HepG2 (cell line): ENCODE measurements at regions of chr6 and their contacts with region 1.

Region 1: DNA sequence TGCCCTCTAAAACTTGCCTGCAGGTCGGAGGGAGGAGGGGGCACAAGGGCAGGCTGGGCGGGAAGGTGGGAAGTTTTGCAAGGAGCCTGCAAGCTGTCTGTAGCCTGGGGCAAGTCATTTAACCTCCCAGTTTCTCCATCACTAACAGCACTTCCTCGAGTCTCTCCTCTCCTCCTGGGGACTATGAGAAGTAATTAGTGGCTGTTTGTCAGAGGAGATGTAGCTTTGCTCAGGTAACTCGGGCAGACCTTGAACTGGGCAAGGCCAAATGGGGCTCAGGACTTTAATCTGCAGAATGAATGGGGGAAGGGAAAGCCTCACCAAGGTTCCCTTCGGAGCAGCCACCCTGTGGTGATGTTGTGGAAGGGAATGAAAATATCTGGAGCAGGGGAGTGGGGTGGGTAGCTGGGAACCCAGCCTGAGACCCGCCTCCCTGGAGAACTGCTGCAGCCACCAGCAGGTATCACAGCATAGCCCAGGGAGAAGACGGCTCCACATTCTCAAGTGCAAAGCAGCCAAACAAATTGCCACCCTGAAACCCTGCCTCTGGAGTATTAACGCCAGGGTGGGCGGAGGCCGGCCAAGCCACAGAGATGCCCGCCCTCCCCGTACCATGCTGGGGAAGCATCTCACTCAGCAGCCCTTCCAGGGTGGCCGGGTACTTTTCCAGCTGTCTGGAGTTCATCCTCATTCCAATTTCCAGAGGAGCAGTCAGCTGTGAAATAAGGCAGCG is 6.1 kb upstream of the LEMD2 start:
- DNase-seq: peak; percentile 40
- ATAC-seq: peak; percentile 70
- H3K4me3 ChIP-seq: peak overlapping the region in 1 of 3 experiments; percentile 8; a peak in 1 of 6 replicates
- H3K27ac ChIP-seq: no peak overlapping the region
- H3K4me1 ChIP-seq: peaks cover 32% of the 10 kb centered on the region
- H3K27me3 ChIP-seq: peaks cover 5 to 52% of the 10 kb centered on the region in 2 experiments; a peak in 4 of 5 replicates
- CTCF ChIP-seq: 0 out of 2 replicates have a peak, but pooled peaks have one; percentile 37
- EP300 ChIP-seq: peak in 1 of 2 experiments; percentile 25; a peak in 1 of 4 replicates
- POLR2A ChIP-seq: no peak
- RAD21 ChIP-seq: no peak

Region 2: GRCh38 chr6:33830635-33831240 is 35.7 kb after region 1 on chr6:
- CTCF ChIA-PET with region 1: no interaction called
- POLR2A ChIA-PET with region 1: no interaction called
- in situ Hi-C with region 1: no loop called
- intact Hi-C with region 1: loop called (anchors 1 kb)
- DNase-seq: no peak
- ATAC-seq: peak; percentile 55
- H3K4me3 ChIP-seq: no peak overlapping the region
- H3K27ac ChIP-seq: no peak overlapping the region
- H3K4me1 ChIP-seq: peaks cover 20% of the 10 kb centered on the region
- H3K27me3 ChIP-seq: peaks cover 2 to 32% of the 10 kb centered on the region in 2 experiments; a peak in 3 of 5 replicates
- CTCF ChIP-seq: no peak
- EP300 ChIP-seq: no peak
- POLR2A ChIP-seq: no peak
- RAD21 ChIP-seq: no peak